ENCODE measurements at regions of chr7 and their contacts with region 1.

Region 1: DNA sequence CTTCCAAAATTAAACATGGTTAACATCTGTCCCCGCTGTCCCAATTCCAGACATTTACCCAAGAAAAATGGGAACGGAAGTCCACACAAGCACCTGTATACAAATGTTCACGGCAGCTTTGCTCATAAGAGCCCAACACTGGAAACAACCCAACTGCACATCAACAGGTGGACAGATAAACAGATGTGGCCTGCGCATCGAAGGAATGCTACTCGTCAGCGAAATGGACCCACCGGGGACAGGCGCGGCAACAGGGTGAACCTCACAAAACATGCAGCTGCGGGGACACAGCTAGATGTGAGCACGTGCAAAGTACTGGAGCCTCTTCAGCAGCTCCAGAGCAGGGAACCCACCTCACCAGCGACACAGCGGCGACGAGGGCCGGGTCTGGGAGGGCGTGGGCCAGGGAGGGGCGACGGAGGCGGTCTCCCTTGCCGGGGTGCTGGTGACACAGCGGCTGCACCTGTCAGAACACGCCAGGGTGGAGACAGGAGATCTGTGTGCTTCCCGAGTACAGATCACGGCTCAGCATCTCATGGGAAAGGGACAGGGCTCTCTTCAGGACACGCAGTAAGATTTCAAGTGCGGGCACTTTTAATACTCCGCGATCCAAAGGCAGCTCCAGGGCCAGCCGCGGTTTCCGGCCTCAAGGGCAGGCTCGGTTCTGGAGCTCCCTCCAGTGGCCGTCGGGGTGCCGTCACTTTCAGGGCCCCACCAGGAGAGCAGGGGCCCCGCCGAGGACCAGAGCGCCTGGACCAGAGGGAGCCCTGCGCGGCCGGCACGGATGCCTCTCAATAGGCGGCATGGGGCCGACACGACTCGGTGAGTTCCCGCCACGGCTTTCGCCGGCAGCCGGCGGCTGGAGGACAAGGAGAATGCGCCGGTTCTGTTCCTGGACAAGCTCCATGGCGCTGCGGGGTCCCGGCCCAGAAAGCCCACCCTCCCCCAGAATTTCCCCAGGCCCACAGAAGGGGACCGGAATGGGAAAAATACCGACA is 21.2 kb downstream of the GPR146 start:
- DNase-seq: peak; percentile 91
- ATAC-seq: peak; percentile 93

Region 2: GRCh38 chr7:994592-995308 is 70.8 kb before region 1 on chr7:
- intact Hi-C with region 1: loop called (anchors 2 kb)
- DNase-seq: no peak
- ATAC-seq: no peak